ENCODE measurements at regions of chr11 and their contacts with region 1.

Region 1: DNA sequence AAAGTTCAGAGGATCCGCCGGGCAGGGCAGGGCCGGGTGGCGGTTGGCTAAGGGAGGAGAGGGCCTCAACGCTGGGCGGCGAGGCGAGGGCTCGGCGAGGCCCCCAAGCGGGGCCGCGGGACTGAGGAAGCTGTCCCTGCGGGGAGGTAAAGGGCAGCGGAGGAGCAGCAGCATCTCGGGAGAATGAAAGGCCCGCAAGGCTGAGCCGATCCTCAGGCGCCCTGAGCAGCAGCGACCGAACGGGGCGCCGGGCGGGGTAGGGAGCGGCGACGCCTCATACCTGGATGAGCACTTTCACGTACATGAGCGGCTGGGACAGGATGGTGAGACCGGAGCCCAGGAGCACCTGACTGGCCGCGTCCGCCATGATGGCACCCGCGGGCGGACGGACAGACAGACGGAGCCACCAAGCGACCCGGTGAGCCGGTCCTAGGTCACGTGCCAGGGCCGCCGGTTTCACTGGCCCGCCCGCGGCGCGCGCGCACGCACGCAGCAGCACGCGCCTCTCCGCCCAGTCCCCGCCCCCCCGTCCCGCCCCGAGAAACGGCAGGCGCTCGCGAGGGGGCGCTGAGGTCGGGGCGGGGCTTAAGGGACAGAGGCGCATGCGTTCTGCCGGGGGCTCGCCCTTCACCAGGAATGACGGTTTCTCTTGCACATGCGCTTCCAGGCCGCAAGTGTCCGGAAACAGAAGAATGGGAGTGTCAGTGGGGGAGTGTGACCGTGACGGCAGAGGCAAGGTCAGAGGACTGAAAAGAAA is at the start of gene MTCH2:
- DNase-seq: peak; percentile 98
- ATAC-seq: peak; percentile 94
- H3K4me3 Mint-ChIP-seq: peak within 1 kb of the TSS; percentile 99
- H3K27ac Mint-ChIP-seq: peak within 1 kb of the TSS; percentile 96
- H3K4me1 Mint-ChIP-seq: peaks cover 25% of the 10 kb centered on the region
- H3K27me3 Mint-ChIP-seq: no peaks in the 10 kb centered on the region
- total RNA-seq, gene MTCH2: 94.8 to 138 TPM

Region 2: DNA sequence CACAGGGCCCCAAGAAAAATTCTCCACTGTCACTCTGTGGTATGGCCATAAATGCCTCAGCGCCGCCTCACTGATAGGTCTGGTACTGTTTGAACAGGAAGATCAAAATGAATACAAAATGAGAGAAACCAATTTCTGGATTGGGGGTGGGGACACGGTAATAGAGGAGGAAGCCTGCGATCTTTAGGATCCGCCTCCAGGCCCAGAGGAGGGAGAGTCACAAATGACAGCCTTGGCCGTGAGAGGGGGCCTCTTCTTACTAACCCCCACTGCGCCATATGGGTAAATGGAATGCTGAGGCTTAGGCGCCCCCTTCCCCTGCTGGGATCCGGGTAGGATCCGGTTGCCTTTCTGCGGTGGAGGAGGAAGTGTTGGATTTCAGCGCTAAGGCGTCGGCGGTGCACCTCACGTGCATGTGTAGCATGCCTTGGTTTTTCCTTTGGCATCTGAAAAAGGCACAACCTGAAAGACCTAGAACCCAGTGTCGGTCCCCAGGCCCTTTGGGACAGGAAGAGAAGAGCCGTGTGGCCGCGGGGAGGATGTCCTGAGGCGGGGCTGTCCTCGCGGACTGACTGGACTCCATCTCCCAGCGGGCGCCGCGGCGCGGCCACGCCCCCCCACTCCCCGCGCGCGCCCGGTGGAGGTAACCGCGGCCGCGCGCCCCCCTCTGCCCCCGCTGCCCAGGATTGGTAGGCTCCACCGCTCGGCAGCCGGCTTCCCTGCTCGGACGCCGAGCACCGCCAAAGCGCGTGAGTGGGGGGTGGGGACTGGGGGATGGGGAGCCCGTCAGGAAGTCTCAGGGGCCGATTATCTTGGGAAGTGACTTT is 373.1 kb before region 1 on chr11:
- CTCF ChIA-PET with region 1: no interaction called
- POLR2A ChIA-PET with region 1: no interaction called
- intact Hi-C with region 1: loop called in 1 of 2 experiments (anchors 1 kb)
- DNase-seq: peak; percentile 93
- ATAC-seq: peak; percentile 61
- H3K4me3 Mint-ChIP-seq: peak overlapping the region; percentile 76
- H3K27ac Mint-ChIP-seq: peak overlapping the region; percentile 98
- H3K4me1 Mint-ChIP-seq: peaks cover 60% of the 10 kb centered on the region
- H3K27me3 Mint-ChIP-seq: no peaks in the 10 kb centered on the region

Region 3: GRCh38 chr11:47565340-47566148 is 76.7 kb before region 1 on chr11 and contains the start of gene PTPMT1:
- CTCF ChIA-PET with region 1: no interaction called
- POLR2A ChIA-PET with region 1: no interaction called
- intact Hi-C with region 1: loop called in 1 of 2 experiments (anchors 1 kb)
- DNase-seq: peak; percentile 85
- ATAC-seq: peak; percentile 95
- H3K4me3 Mint-ChIP-seq: peak within 1 kb of the TSS; percentile 82
- H3K27ac Mint-ChIP-seq: peak within 1 kb of the TSS; percentile 82
- H3K4me1 Mint-ChIP-seq: peaks cover 28% of the 10 kb centered on the region
- H3K27me3 Mint-ChIP-seq: no peaks in the 10 kb centered on the region
- total RNA-seq, gene PTPMT1: 35.6 to 41.5 TPM

Region 4: DNA sequence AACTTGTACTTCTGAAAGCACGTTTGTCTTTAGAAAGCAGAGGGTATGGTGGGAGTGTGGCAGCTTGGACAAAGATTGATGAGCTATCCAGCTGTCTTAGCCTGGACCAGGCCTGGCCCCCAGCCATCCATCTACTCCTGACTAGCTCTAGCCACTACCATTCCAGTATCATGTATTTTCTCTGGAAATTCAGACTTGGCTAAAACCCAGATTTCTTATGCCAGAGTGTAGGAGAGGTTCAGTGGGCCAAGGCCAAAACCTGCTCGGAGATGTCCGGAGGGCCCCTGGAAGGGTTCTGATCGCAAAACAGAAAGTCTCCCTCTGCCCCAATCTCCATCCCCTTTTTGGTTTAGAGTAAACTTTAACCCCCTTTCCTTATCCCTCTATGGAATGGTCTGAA is 24.9 kb after region 1 on chr11:
- CTCF ChIA-PET with region 1: no interaction called
- POLR2A ChIA-PET with region 1: no interaction called
- intact Hi-C with region 1: loop called (anchors 1 kb)
- DNase-seq: no peak
- ATAC-seq: no peak
- H3K4me3 Mint-ChIP-seq: no peak overlapping the region
- H3K27ac Mint-ChIP-seq: no peak overlapping the region
- H3K4me1 Mint-ChIP-seq: peaks cover 27% of the 10 kb centered on the region
- H3K27me3 Mint-ChIP-seq: no peaks in the 10 kb centered on the region

Region 5: GRCh38 chr11:47715082-47715669 is 72.9 kb after region 1 on chr11 and contains the start of gene AGBL2:
- CTCF ChIA-PET with region 1: interaction called, 4 read pairs
- POLR2A ChIA-PET with region 1: no interaction called
- intact Hi-C with region 1: loop called (anchors 1 kb)
- DNase-seq: peak; percentile 92
- ATAC-seq: peak; percentile 98
- H3K4me3 Mint-ChIP-seq: peak within 1 kb of the TSS; percentile 91
- H3K27ac Mint-ChIP-seq: peak within 1 kb of the TSS; percentile 96
- H3K4me1 Mint-ChIP-seq: peaks cover 22% of the 10 kb centered on the region
- H3K27me3 Mint-ChIP-seq: no peaks in the 10 kb centered on the region
- total RNA-seq, gene AGBL2: 3.5 to 5.6 TPM

Measured in activated CD4-positive, alpha-beta T cell treated with anti-CD3 and anti-CD28 coated beads for 36 hours (primary cell).